ENCODE measurements at regions of chr2 and their contacts with region 1.

Region 1: GRCh38 chr2:220935789-220936321 is 636.2 kb downstream of the EPHA4 start:
- DNase-seq: peak; percentile 43
- ATAC-seq: peak; percentile 93
- H3K4me3 Mint-ChIP-seq: no peak overlapping the region
- H3K27ac Mint-ChIP-seq: peak overlapping the region; percentile 14
- H3K4me1 Mint-ChIP-seq: peaks cover 11% of the 10 kb centered on the region
- H3K27me3 Mint-ChIP-seq: peaks cover 6% of the 10 kb centered on the region

Region 2: GRCh38 chr2:220891405-220891804 is 44.5 kb before region 1 on chr2:
- CTCF ChIA-PET with region 1: no interaction called
- POLR2A ChIA-PET with region 1: no interaction called
- intact Hi-C with region 1: no loop called
- DNase-seq: no peak
- ATAC-seq: no peak
- H3K4me3 Mint-ChIP-seq: no peak overlapping the region
- H3K27ac Mint-ChIP-seq: no peak overlapping the region
- H3K4me1 Mint-ChIP-seq: no peaks in the 10 kb centered on the region
- H3K27me3 Mint-ChIP-seq: peaks cover 2% of the 10 kb centered on the region

Region 3: GRCh38 chr2:221502270-221503010 is 566.6 kb after region 1 on chr2:
- CTCF ChIA-PET with region 1: no interaction called
- POLR2A ChIA-PET with region 1: no interaction called
- intact Hi-C with region 1: loop called in 1 of 2 experiments (anchors 1 kb)
- DNase-seq: peak; percentile 56
- ATAC-seq: peak; percentile 84
- H3K4me3 Mint-ChIP-seq: no peak overlapping the region
- H3K27ac Mint-ChIP-seq: peak overlapping the region; percentile 66
- H3K4me1 Mint-ChIP-seq: peaks cover 37% of the 10 kb centered on the region
- H3K27me3 Mint-ChIP-seq: no peaks in the 10 kb centered on the region